Activated CD4-positive, alpha-beta T cell treated with anti-CD3 and anti-CD28 coated beads, Interleukin-2, amount 10 ng/mL, durations not matched to agents 24 days and 14 days (primary cell): ENCODE measurements at regions of chr3 and their contacts with region 1.

Region 1: GRCh38 chr3:46297658-46298463 is 55.6 kb downstream of the CCR3 start:
- DNase-seq: peak; percentile 62
- H3K4me3 Mint-ChIP-seq: peak overlapping the region; percentile 22
- H3K27ac Mint-ChIP-seq: peak overlapping the region; percentile 81
- H3K4me1 Mint-ChIP-seq: peaks cover 83% of the 10 kb centered on the region
- H3K27me3 Mint-ChIP-seq: peaks cover 4% of the 10 kb centered on the region

Region 2: DNA sequence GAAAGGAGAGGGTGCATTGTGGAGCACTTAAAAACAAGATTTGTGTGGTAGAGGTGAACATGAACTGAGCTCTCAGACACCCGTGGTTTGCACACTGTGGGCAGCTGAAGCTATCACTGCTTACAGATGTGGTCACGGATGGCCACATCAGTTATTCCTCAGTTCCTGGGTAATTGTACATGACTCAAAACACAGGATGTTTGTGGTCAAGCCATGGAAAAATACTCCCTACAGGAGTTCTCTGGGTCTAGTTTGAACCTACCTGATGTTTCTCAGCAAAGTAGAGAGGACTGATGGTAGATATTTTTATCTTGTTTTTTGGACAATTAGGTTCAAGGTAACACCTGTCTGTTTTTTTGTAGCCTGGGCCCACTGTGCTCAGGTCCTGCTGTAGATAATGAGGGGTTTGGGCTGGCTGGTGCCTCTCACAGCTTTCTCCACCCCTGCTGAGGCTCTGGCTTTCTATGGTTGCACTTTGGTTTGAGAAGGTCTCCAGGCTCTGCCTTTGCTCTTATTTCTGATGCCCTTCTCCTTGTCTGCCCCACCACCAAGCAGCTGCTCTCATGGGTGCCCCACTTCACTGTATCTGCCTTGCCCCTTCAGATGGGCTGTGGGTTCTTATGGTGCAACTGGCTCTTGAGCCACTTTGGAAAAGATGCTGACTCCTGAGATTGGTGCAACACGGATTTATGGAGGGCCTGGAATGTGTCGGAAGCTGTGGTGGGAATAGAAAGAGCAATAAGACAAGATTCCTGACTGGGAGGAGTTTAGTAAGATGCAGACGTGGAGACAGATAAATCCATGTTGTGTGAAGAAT is 1191.8 kb before region 1 on chr3:
- intact Hi-C with region 1: loop called (anchors 10 kb)
- DNase-seq: peak; percentile 95
- H3K4me3 Mint-ChIP-seq: peak overlapping the region; percentile 62
- H3K27ac Mint-ChIP-seq: peak overlapping the region; percentile 89
- H3K4me1 Mint-ChIP-seq: peaks cover 70% of the 10 kb centered on the region
- H3K27me3 Mint-ChIP-seq: peaks cover 10% of the 10 kb centered on the region

Region 3: DNA sequence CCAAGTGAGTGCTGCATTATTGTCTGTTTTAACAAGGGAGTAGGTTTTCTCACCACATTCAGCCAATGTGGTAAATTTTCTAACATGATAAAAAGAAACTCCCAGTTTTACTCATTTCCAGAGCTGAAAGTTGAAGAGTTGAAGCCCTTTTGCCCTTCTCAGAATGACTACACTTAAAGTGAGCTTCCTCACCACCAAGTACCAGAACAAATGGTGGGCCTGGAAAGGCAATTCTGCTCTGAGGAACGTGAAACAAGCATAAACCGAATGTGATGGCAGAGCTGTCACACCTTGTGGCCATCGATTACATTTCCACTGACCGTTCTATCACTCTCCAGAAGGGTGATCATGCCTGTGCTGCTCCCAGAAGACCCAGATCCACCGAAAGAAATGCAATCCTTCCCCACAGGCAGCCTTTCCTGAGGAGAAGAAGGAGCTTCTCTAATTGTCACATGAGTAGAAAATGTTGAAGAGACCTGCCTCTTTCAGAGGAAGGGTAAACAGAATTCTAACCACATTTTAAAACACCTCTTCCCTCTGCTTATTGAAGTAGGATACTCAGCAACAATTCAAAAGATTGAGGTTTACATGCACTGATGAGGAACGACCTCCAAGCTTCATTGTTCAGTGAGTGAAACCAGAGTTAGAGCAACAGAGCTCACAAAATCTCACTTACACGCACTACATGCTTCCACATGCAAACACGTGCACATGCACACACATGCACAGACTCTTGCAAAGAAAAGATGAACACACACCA is 432.9 kb before region 1 on chr3:
- intact Hi-C with region 1: loop called (anchors 2 kb)
- DNase-seq: peak; percentile 79
- H3K4me3 Mint-ChIP-seq: peak overlapping the region; percentile 46
- H3K27ac Mint-ChIP-seq: peak overlapping the region; percentile 39
- H3K4me1 Mint-ChIP-seq: peaks cover 41% of the 10 kb centered on the region
- H3K27me3 Mint-ChIP-seq: peaks cover 58% of the 10 kb centered on the region

Region 4: DNA sequence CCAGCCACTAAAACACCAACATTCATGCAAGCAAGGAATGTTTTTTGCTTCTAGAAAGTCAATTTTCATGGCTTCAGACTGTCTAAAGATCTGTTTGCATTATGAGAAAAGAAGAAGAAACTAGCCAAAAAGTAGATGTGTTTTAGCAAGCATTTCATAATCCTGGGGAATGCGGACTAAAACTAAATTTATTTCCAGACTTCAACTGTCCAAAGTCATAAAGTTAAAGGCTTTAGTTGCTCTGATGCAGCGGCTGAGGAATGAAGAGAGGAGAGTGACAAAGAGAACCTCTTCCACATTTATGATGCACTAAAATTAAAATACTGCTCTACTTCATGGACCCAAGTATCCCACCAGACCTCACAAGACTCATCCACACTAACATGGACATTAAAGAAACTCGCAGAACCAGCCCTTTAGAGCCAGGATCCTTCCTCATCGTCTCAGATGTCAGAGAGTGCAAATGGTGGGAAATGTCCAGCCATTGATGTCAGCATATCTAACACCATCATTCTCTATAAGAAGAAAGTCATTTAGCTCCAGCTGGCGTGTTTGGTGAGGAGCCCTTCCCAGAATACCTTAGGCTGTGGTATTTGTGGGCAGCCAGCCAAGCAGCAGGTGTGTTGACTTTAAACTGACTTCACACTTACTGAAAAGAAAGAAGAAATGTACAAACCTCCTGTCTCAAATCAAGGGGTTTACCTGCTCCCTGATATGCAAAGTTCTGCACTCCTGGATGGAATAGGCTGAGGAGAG is 319.7 kb before region 1 on chr3:
- intact Hi-C with region 1: loop called (anchors 5 kb)
- DNase-seq: peak; percentile 91
- H3K4me3 Mint-ChIP-seq: peak overlapping the region; percentile 80
- H3K27ac Mint-ChIP-seq: peak overlapping the region; percentile 95
- H3K4me1 Mint-ChIP-seq: peaks cover 84% of the 10 kb centered on the region
- H3K27me3 Mint-ChIP-seq: no peaks in the 10 kb centered on the region

Region 5: DNA sequence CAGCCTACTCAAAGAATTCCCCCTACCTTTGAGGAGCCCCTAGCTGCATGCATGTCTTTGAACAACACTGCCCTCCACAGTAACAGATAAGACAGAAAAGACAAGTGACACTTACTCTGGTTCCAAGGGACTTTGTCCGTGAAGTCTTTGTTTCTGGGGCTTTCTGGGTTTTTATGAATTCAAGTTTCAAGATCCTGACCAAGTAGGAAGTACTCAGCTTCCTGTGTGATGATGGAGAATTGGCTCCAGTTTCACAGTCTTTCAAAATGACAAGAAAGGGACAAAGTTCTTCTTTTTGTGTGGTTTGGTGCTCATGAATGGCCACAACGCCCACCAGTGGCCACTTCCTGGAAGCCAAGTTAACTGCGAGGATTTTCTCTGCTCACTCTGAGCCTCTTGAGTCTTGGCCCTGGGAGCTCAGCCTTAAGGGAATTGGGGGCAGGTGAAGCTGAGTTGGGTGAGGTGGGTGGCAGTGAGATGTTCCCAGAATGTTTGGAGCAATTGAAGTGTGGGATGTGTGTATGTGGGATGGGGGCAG is 89.6 kb before region 1 on chr3 and contains the start of gene CCR1:
- intact Hi-C with region 1: loop called (anchors 1 kb)
- DNase-seq: peak; percentile 89
- H3K4me3 Mint-ChIP-seq: peak within 1 kb of the TSS; percentile 73
- H3K27ac Mint-ChIP-seq: peak within 1 kb of the TSS; percentile 74
- H3K4me1 Mint-ChIP-seq: peaks cover 56% of the 10 kb centered on the region
- H3K27me3 Mint-ChIP-seq: peaks cover 2% of the 10 kb centered on the region
- total RNA-seq, gene CCR1: 5.9 and 6.7 TPM in 2 replicates

Region 6: DNA sequence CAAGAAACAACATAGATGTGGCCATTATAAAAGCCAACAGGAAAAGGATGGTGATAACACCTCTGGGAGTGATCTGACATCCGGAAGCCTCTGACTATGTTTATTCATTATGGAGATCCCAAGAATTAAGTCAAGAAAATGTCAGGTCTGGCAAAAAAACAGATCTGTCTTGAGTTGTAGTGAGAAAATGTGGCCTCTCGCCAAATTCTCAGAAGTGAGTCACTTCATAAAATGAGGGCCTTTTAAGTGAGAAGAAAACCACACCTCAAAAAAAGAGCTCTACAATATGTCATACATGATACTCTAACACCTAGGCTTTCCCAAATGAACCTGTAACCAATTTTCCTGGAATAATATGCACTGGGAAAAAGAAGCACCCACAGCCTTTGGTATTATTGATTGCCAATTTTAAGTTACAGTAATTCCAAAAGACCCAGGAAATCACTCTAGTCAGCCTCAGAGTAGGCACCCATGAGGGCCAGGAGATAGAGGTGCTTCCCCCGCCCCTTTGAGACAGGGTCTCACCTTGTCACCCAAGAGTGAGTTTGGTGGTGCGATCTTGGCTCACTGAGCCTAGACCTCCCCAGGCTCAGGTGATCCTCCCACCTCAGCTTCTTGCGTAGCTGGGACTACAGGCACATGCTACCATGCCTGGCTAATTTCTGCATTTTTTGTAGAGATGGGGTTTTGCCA is 17.6 kb before region 1 on chr3:
- intact Hi-C with region 1: loop called (anchors 1 kb)
- DNase-seq: peak; percentile 88
- H3K4me3 Mint-ChIP-seq: peak overlapping the region; percentile 34
- H3K27ac Mint-ChIP-seq: peak overlapping the region; percentile 72
- H3K4me1 Mint-ChIP-seq: peaks cover 74% of the 10 kb centered on the region
- H3K27me3 Mint-ChIP-seq: peaks cover 5% of the 10 kb centered on the region

Region 7: GRCh38 chr3:46321461-46322104 is 23.7 kb after region 1 on chr3:
- intact Hi-C with region 1: no loop called
- DNase-seq: no peak
- H3K4me3 Mint-ChIP-seq: no peak overlapping the region
- H3K27ac Mint-ChIP-seq: no peak overlapping the region
- H3K4me1 Mint-ChIP-seq: no peaks in the 10 kb centered on the region
- H3K27me3 Mint-ChIP-seq: peaks cover 37% of the 10 kb centered on the region

Region 8: GRCh38 chr3:46349485-46350261 is 51.8 kb after region 1 on chr3:
- intact Hi-C with region 1: loop called (anchors 2 kb)
- DNase-seq: peak; percentile 77
- H3K4me3 Mint-ChIP-seq: peak overlapping the region; percentile 68
- H3K27ac Mint-ChIP-seq: peak overlapping the region; percentile 82
- H3K4me1 Mint-ChIP-seq: peaks cover 64% of the 10 kb centered on the region
- H3K27me3 Mint-ChIP-seq: peaks cover 25% of the 10 kb centered on the region